Activated CD4-positive, alpha-beta T cell treated with anti-CD3 and anti-CD28 coated beads, Interleukin-2, amount 10 ng/mL, durations not matched to agents 24 days and 14 days (primary cell): ENCODE measurements at regions of chr16 and their contacts with region 1.

Region 1: GRCh38 chr16:4271176-4272066 is 1.4 kb downstream of the TFAP4 start:
- DNase-seq: peak; percentile 97
- H3K4me3 Mint-ChIP-seq: peak overlapping the region; percentile 89
- H3K27ac Mint-ChIP-seq: peak overlapping the region; percentile 96
- H3K4me1 Mint-ChIP-seq: peaks cover 11% of the 10 kb centered on the region
- H3K27me3 Mint-ChIP-seq: no peaks in the 10 kb centered on the region

Region 2: GRCh38 chr16:4183237-4184036 is 88.0 kb before region 1 on chr16:
- intact Hi-C with region 1: loop called (anchors 1 kb)
- DNase-seq: peak; percentile 98
- H3K4me3 Mint-ChIP-seq: peak overlapping the region; percentile 83
- H3K27ac Mint-ChIP-seq: peak overlapping the region; percentile 83
- H3K4me1 Mint-ChIP-seq: peaks cover 4% of the 10 kb centered on the region
- H3K27me3 Mint-ChIP-seq: peaks cover 17% of the 10 kb centered on the region

Region 3: GRCh38 chr16:4288148-4288921 is 16.9 kb after region 1 on chr16:
- intact Hi-C with region 1: loop called (anchors 2 kb)
- DNase-seq: peak; percentile 95
- H3K4me3 Mint-ChIP-seq: no peak overlapping the region
- H3K27ac Mint-ChIP-seq: no peak overlapping the region
- H3K4me1 Mint-ChIP-seq: peaks cover 12% of the 10 kb centered on the region
- H3K27me3 Mint-ChIP-seq: peaks cover 9% of the 10 kb centered on the region

Region 4: DNA sequence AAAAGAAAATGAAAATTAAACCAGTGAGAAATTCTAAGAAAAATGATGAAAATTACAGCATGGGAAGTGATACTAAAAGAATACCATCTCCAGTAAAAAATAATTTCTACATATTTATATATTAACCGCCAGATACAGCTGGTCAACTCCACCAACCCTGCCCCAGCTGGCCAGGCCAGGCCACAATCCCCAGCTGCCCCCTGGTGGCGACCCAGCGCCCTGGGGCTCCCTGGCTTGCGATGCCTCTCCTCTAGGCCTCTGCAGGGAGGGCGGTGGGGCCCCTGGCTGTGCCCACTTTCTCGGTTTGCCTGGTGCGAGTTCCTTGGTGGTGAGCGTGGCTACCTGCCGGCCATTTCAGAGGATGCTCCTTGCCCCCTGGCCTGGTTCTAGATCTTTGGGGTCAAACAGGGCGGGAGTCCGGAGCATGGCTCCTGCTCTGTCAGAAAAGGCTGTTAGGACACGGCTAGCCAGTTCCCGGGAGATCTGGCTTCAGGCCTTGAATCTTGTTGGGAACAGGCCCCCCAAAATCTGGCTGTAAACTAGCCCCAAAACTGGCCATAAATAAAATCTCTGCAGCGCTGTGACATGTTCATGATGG is 59.0 kb after region 1 on chr16:
- intact Hi-C with region 1: loop called (anchors 5 kb)
- DNase-seq: peak; percentile 92
- H3K4me3 Mint-ChIP-seq: no peak overlapping the region
- H3K27ac Mint-ChIP-seq: no peak overlapping the region
- H3K4me1 Mint-ChIP-seq: no peaks in the 10 kb centered on the region
- H3K27me3 Mint-ChIP-seq: peaks cover 8% of the 10 kb centered on the region

Region 5: GRCh38 chr16:4416200-4417032 is 145.0 kb after region 1 on chr16 and contains the start of gene CORO7:
- intact Hi-C with region 1: loop called (anchors 5 kb)
- DNase-seq: peak; percentile 100
- H3K4me3 Mint-ChIP-seq: peak within 1 kb of the TSS; percentile 93
- H3K27ac Mint-ChIP-seq: peak within 1 kb of the TSS; percentile 89
- H3K4me1 Mint-ChIP-seq: peaks cover 34% of the 10 kb centered on the region
- H3K27me3 Mint-ChIP-seq: peaks cover 6% of the 10 kb centered on the region
- total RNA-seq, gene CORO7: 86.3 and 93.3 TPM in 2 replicates